Tibial artery (tissue), 4 donors: ENCODE measurements at regions of chr18 and their contacts with region 1.

Region 1: DNA sequence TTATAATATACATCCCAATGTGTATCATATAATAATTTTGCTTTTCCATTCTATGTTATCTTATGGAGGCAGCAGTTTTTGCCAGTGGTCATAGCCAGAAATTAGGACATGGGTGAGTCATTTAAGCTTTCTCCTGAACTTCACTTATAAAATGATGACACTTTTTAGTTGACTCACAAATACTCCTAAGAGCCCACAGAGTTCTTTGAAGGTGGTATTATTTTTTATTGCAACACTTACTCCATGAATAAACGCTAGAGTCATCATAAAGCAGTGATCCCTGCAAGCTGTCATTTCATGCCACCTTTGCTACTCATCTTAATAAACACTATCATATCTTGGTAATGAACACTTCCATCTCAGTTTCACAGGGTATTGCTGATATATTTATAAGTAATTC is 69.9 kb upstream of the MAPRE2 start:
- DNase-seq: no peak
- H3K4me3 ChIP-seq: no peak overlapping the region
- H3K27ac ChIP-seq: no peak overlapping the region
- H3K4me1 ChIP-seq: peaks cover 0 to 13% (median 4%) of the 10 kb centered on the region in 4 donors
- H3K27me3 ChIP-seq: no peaks in the 10 kb centered on the region
- CTCF ChIP-seq: no peak

Region 2: DNA sequence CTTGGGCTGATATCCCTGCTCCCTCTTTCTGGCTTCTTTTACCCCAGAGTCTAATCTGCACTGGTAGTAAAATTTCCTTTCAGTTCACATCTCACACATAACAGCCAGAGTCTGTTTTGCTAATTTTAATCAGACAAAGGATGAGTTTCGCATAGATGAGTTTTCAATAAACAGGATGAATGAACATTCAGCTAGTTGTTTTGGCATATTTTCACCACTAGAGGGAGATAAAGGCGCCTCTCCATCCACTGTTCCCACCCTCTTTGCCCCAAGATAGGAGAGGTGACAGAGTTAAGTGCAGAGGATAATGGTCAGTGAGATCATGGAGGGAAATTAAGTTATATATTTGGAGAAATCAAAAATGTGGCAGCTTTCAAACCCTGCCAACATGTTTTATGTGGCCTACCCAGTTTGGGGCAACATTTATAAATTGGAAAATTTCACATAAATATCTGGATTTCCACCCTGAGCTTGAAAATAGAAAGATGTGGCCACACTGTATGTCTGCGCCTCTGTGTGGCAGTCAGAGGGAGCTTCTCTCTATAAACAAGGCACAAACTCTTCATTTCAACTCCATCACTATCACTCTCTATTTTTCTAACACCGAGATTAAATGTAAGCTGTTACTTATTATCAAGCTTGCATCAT is 309.7 kb before region 1 on chr18:
- intact Hi-C with region 1: no loop called
- DNase-seq: no peak
- H3K4me3 ChIP-seq: no peak overlapping the region
- H3K27ac ChIP-seq: peak overlapping the region; percentile 77 to 82
- H3K4me1 ChIP-seq: peaks cover 0 to 58% (median 16%) of the 10 kb centered on the region in 4 donors
- H3K27me3 ChIP-seq: no peaks in the 10 kb centered on the region
- CTCF ChIP-seq: peak; percentile 60 to 62

Region 3: DNA sequence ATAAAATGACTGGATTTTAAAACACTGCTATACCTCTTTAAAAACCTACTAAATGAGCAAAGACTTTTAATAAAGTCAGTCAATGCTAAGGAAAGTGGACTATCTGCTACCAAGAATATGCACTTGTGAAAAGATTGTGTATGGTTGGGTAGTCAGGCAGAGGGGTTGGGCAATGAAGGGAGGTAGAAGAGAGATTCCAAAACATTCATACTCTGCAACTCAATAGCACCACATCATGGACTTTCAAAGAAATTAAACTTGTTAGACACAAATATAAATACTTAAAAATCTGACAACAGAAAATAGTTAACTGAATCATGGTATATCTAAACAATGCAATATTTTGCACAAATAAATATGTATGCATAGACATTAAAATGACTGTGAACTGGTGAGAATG is 70.0 kb before region 1 on chr18:
- intact Hi-C with region 1: loop called (anchors 2 kb)
- DNase-seq: no peak
- H3K4me3 ChIP-seq: no peak overlapping the region
- H3K27ac ChIP-seq: no peak overlapping the region
- H3K4me1 ChIP-seq: peaks cover 0 to 5% (median 0%) of the 10 kb centered on the region in 4 donors
- H3K27me3 ChIP-seq: no peaks in the 10 kb centered on the region
- CTCF ChIP-seq: peak; percentile 32 to 62